ENCODE measurements at regions of chr15 and their contacts with region 1.

Region 1: DNA sequence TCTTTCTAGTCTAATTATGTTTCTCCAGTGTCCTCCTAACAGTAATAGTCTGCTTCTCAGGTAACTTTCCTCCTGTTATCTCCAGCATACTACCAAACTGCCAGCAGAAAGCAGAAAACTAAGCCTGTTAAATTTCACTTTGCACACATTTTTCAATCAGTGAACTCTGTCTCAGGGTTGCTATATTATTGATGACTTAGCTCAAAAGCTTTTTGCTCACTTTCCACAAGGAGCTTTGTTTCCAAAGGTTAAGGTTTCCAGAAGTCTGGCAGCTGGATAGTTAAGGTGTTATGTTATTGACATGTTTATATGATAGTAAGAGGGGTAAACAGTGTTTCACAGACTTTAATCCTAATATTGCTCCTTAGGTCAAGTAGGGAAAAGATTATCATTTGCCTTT is 5.1 kb downstream of the TRPM7 start:
- DNase-seq: no peak
- ATAC-seq: no peak
- H3K4me3 ChIP-seq: no peak overlapping the region
- H3K27ac ChIP-seq: peak overlapping the region in 1 of 4 donors; percentile 23
- H3K4me1 ChIP-seq: peaks cover 16 to 31% of the 10 kb centered on the region in 2 donors
- H3K27me3 ChIP-seq: no peaks in the 10 kb centered on the region
- CTCF ChIP-seq: no peak
- POLR2A ChIP-seq: no peak

Region 2: GRCh38 chr15:50280271-50280670 is 401.2 kb before region 1 on chr15:
- in situ Hi-C with region 1: no loop called
- intact Hi-C with region 1: no loop called
- DNase-seq: no peak
- ATAC-seq: no peak
- H3K4me3 ChIP-seq: no peak overlapping the region
- H3K27ac ChIP-seq: no peak overlapping the region
- H3K4me1 ChIP-seq: no peaks in the 10 kb centered on the region
- H3K27me3 ChIP-seq: no peaks in the 10 kb centered on the region
- CTCF ChIP-seq: no peak
- POLR2A ChIP-seq: no peak

Region 3: DNA sequence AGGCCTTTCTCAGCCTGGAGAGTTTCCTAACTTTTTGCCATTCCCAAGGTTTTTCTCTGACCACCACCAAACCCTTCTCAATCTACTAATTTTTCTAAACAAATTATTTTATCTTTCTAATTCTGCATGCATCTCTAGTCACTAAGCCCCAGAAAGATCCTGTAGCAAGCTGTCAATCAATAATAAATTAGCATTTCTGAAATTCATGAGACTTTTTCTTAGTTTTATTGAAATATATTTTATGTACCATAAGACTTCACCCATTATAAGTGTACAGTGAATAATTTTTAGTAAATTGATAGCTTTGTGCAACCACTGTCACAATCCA is 204.6 kb after region 1 on chr15:
- in situ Hi-C with region 1: loop called in 3 of 4 experiments (anchors 5 to 10 kb)
- intact Hi-C with region 1: no loop called
- DNase-seq: no peak
- ATAC-seq: no peak
- H3K4me3 ChIP-seq: no peak overlapping the region
- H3K27ac ChIP-seq: no peak overlapping the region
- H3K4me1 ChIP-seq: peaks cover 12 to 17% of the 10 kb centered on the region in 2 donors
- H3K27me3 ChIP-seq: no peaks in the 10 kb centered on the region
- CTCF ChIP-seq: no peak
- POLR2A ChIP-seq: no peak

Measured in gastrocnemius medialis (tissue), 4 donors.